B cell (primary cell): ENCODE measurements at regions of chr17 and their contacts with region 1.

Region 1: DNA sequence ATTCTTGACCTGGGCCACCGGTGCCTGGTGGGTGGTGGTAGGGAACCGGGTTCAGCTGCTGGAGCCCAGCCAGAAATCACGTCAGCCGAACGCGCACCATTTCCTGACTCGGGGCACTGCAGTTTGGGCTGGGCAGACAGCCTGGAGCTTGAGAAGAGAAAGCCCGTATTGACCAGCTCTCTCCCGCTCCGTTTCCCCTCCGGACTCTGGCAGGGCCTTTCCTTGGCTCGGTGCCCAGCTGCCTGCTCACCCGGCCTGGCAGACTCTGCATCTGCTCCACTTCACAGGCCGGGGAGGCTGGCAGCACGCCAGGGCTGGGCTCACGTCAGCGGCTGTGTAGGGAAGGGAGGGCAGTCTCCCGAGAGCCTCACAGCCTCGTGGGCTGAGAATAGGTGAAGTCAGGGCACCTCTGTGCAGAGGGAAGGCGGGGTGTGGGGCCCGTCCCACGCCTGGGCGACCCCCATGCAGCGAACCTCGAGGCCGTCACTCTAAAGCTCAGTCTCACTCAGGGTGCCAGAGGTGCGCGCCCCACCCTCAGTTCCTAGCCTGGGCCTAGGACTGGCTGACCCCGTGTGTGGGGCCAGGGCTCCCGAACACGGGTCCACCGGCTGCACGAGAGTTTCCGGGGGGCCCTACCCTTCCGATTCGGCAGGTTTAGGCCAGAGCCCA is 59.1 kb downstream of the OR1D5 start:
- DNase-seq: peak; percentile 92
- ATAC-seq: peak; percentile 42
- H3K4me3 ChIP-seq: peak overlapping the region in 4 of 5 experiments; percentile 46 to 56 (median 52)
- H3K4me3 Mint-ChIP-seq: peak overlapping the region; percentile 87
- H3K27ac ChIP-seq: peak overlapping the region; percentile 89 to 96
- H3K27ac Mint-ChIP-seq: peak overlapping the region; percentile 100
- H3K4me1 ChIP-seq: peaks cover 37 to 46% of the 10 kb centered on the region in 2 donors
- H3K4me1 Mint-ChIP-seq: peaks cover 39% of the 10 kb centered on the region
- H3K27me3 ChIP-seq: no peaks in the 10 kb centered on the region
- H3K27me3 Mint-ChIP-seq: no peaks in the 10 kb centered on the region
- CTCF ChIP-seq: no peak

Region 2: DNA sequence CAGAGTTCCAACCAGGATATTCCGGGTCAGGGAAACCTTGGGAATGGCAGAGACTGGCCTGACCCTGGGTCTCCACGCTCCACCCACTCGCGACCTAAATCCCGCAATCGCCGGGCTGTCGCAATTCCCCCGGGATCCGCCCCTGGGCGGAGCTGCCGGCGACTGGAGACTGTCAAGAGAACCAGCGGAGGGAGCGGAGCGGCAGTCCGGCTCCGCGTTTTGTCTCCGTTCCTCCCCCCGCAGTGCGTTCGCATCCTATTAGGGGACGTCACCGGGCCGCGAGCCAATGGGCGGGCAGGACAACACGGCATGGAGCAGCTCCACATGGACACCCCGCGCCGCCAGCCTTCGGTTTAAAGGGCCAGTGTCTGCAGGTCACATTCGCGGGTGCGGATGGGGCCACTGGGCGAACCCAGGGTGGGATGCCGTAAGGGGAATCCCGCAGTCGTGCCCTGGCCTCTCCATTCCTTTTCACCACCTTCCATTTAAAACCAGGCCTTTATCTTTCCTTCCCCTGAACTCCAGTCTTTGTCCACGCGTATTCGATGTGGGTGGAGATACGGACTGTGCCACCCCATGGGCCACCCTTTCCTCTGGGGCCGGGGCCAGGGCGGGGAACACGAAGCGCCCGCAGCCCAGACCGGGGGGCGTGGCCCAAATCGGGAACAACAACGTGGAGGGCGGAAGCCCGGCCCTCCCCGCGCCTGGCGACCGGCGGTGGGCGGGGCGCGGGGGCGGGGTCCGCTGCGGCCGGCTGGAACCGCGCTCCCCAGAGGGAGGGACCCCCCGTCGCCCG is 602.6 kb before region 1 on chr17:
- CTCF ChIA-PET with region 1: no interaction called
- POLR2A ChIA-PET with region 1: no interaction called
- intact Hi-C with region 1: loop called (anchors 5 kb)
- DNase-seq: peak; percentile 96
- ATAC-seq: peak; percentile 57
- H3K4me3 ChIP-seq: peak overlapping the region; percentile 64 to 99 (median 94)
- H3K4me3 Mint-ChIP-seq: peak overlapping the region; percentile 99
- H3K27ac ChIP-seq: peak overlapping the region; percentile 95 to 98
- H3K27ac Mint-ChIP-seq: peak overlapping the region; percentile 99
- H3K4me1 ChIP-seq: peaks cover 32 to 36% of the 10 kb centered on the region in 2 donors
- H3K4me1 Mint-ChIP-seq: peaks cover 38% of the 10 kb centered on the region
- H3K27me3 ChIP-seq: no peaks in the 10 kb centered on the region
- H3K27me3 Mint-ChIP-seq: no peaks in the 10 kb centered on the region
- CTCF ChIP-seq: no peak

Region 3: DNA sequence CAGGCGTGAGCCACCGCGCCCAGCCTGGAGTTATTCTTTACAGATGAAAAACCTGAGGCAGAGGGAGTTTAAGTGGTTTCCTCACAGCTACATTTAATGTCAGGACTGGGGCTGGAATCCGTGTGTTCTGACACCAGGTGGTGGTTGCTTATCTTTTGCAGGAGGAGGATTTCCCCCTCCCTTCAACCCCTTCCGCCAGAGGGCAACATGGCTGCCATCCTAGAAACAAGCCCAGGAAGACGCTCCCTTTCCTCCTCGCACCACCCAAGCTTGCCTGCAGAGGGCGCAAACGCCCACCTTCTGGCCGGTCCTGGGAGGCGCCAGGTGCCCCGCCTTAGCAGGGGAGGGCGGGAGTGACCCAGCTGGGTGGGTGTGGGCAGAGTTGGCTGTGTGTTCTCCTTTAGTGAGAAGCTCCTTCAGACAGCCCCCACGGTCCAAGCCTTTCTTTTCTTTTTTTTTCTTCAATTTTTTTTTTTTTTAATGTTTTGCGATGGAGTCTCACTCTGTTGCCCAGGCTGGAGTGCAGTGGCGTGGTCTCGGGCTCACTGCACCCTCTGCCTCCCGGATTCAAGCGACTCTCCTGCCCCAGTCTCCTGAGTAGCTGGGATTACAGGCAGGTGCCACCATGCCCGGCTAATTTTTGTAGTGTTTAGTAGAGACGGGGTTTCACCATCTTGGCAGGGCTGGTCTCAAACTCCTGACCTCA is 217.9 kb before region 1 on chr17:
- CTCF ChIA-PET with region 1: interaction called, 16 read pairs
- POLR2A ChIA-PET with region 1: interaction called, 6 read pairs
- intact Hi-C with region 1: loop called (anchors 2 kb)
- DNase-seq: peak; percentile 95
- ATAC-seq: peak; percentile 99
- H3K4me3 ChIP-seq: no peak overlapping the region
- H3K4me3 Mint-ChIP-seq: peak overlapping the region; percentile 44
- H3K27ac ChIP-seq: no peak overlapping the region
- H3K27ac Mint-ChIP-seq: peak overlapping the region; percentile 41
- H3K4me1 ChIP-seq: peaks cover 18 to 29% of the 10 kb centered on the region in 2 donors
- H3K4me1 Mint-ChIP-seq: peaks cover 19% of the 10 kb centered on the region
- H3K27me3 ChIP-seq: peaks cover 0 to 15% (median 4%) of the 10 kb centered on the region in 4 experiments
- H3K27me3 Mint-ChIP-seq: no peaks in the 10 kb centered on the region
- CTCF ChIP-seq: peak; percentile 89

Region 4: DNA sequence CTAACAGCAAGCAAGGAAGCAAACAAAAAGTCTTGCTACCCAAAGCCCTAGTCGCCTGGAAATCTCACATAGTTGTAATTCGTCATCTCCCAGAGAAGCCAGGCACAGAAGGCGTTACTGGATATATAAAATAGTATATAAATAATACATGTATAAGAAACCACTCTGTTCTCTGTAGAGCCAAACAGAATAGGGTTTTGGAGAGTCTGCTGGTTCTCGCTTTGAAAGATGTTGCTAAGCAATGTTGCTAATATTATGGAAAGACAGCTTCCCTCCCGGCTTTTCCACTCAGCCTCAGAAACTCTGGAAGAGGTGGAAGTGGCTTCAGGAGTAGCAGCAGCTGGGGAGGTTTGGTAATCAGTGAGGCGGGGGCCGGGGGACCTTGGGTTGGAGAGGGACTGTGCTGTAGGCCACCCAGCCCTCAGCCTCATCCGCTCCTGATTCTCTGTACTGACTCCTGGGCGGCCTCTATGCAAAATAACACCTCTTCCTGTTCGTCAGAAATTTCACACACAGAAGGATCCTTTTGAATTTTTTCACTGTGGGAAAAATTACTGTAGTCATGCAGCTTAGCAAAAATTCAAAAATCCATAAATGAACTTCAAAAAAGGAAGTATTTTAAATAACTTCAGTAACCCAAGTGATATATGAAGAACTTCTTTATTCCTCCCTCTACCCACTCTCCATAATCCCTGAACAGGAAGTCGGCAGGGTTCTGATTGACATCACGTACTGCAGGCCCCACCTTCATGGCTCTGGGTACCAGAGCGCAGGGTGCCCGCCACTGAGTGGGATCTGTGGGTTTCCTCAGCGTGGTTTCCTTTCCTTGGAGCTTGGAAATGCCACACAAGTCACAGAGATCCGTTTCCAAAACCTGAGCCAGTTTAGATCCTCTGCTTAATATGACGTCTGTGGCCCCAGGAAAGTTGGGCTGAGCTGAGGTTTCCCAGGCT is 156.6 kb before region 1 on chr17:
- CTCF ChIA-PET with region 1: interaction called, 370 read pairs
- POLR2A ChIA-PET with region 1: interaction called, 3 read pairs
- intact Hi-C with region 1: loop called (anchors 5 kb)
- DNase-seq: no peak
- ATAC-seq: no peak
- H3K4me3 ChIP-seq: no peak overlapping the region
- H3K4me3 Mint-ChIP-seq: no peak overlapping the region
- H3K27ac ChIP-seq: no peak overlapping the region
- H3K27ac Mint-ChIP-seq: no peak overlapping the region
- H3K4me1 ChIP-seq: peaks cover 12 to 17% of the 10 kb centered on the region in 2 donors
- H3K4me1 Mint-ChIP-seq: peaks cover 16% of the 10 kb centered on the region
- H3K27me3 ChIP-seq: peaks cover 0 to 51% (median 9%) of the 10 kb centered on the region in 4 experiments
- H3K27me3 Mint-ChIP-seq: peaks cover 30% of the 10 kb centered on the region
- CTCF ChIP-seq: no peak

Region 5: DNA sequence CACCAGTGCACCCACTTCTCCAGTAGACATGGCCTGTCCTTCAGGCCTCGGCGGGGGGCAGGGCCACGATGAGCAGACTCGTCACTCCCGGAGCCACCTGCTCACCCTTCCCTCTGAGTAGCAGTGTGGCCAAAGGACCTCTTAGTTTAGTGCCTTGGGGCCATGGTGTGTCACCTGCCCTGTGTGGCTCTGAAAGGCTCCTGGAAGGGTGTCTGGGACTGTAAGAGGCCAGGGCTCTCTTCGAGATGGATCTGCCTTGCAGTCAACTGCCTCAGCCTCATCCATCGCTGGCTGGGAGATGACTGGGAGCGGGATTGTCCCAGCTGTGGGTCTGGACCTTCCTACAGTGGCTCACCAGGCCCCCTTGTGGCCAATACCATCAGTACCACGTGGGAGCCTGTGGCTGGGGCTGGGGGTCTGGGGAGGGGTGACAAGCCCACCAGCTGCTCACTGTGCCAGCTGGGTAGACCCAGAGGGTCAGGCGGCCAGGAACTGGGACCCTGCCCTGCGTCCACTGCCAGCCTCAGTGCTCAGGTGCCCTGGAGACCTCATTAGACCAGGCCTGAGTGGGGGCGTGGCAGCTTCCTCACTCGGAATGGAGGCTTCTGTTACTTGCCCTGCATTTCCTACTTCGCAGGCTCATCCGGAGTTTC is 74.3 kb before region 1 on chr17:
- CTCF ChIA-PET with region 1: interaction called, 31 read pairs
- POLR2A ChIA-PET with region 1: interaction called, 24 read pairs
- intact Hi-C with region 1: loop called (anchors 1 kb)
- DNase-seq: peak; percentile 47
- ATAC-seq: peak; percentile 34
- H3K4me3 ChIP-seq: no peak overlapping the region
- H3K4me3 Mint-ChIP-seq: no peak overlapping the region
- H3K27ac ChIP-seq: no peak overlapping the region
- H3K27ac Mint-ChIP-seq: no peak overlapping the region
- H3K4me1 ChIP-seq: peaks cover 24 to 28% of the 10 kb centered on the region in 2 donors
- H3K4me1 Mint-ChIP-seq: peaks cover 28% of the 10 kb centered on the region
- H3K27me3 ChIP-seq: peaks cover 0 to 4% (median 1%) of the 10 kb centered on the region in 4 experiments
- H3K27me3 Mint-ChIP-seq: peaks cover 5% of the 10 kb centered on the region
- CTCF ChIP-seq: peak; percentile 75

Region 6: DNA sequence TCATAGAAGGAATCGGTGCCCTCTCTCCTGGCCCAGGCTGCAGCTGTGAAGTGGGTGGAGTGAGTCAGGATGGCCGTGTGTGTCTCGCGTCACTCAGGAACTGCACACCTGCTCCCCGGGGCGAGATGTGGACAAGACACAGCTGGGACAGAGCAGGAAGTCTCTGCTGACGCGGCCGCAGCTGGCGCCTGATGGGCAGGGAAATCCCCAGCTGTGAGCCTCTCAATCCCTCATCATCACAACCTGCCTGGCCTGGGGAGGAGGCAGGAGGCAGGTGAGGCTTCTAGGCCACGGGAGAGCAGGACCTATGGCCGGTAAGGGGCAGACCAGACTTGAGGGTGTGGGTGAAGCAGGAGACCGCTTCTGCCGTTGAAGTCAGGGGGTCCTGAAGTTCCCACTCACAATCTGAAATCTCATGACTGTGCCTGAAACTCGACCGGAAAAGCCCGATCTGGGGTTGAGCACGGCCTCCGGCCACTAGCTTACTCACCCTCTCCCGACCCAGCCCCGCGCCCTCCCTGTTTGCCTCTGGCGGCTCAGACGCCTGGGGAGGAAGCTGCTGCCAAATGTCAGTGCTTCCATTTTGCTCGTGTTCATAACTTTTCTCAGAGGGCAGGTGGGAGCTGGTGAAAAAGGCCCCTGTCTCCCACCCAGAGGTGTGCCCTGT is 554.5 kb after region 1 on chr17:
- CTCF ChIA-PET with region 1: no interaction called
- POLR2A ChIA-PET with region 1: no interaction called
- intact Hi-C with region 1: loop called (anchors 5 kb)
- DNase-seq: peak; percentile 89
- ATAC-seq: peak; percentile 76
- H3K4me3 ChIP-seq: no peak overlapping the region
- H3K4me3 Mint-ChIP-seq: peak overlapping the region; percentile 77
- H3K27ac ChIP-seq: peak overlapping the region; percentile 73 to 81
- H3K27ac Mint-ChIP-seq: peak overlapping the region; percentile 95
- H3K4me1 ChIP-seq: peaks cover 28 to 40% of the 10 kb centered on the region in 2 donors
- H3K4me1 Mint-ChIP-seq: peaks cover 46% of the 10 kb centered on the region
- H3K27me3 ChIP-seq: peaks cover 0 to 9% (median 0%) of the 10 kb centered on the region in 4 experiments
- H3K27me3 Mint-ChIP-seq: peaks cover 3% of the 10 kb centered on the region
- CTCF ChIP-seq: no peak